Caco-2 (cell line): ENCODE measurements at regions of chr12 and their contacts with region 1.

Region 1: GRCh38 chr12:25524407-25524806 is 28.7 kb downstream of the LMNTD1 start:
- DNase-seq: peak; percentile 64 to 76
- H3K4me3 ChIP-seq: no peak overlapping the region
- H3K4me3 Mint-ChIP-seq: no peak overlapping the region
- H3K27ac Mint-ChIP-seq: peak overlapping the region; percentile 55
- H3K4me1 ChIP-seq: peaks cover 27% of the 10 kb centered on the region
- H3K4me1 Mint-ChIP-seq: peaks cover 23% of the 10 kb centered on the region
- H3K27me3 ChIP-seq: no peaks in the 10 kb centered on the region
- H3K27me3 Mint-ChIP-seq: no peaks in the 10 kb centered on the region
- CTCF ChIP-seq: no peak

Region 2: DNA sequence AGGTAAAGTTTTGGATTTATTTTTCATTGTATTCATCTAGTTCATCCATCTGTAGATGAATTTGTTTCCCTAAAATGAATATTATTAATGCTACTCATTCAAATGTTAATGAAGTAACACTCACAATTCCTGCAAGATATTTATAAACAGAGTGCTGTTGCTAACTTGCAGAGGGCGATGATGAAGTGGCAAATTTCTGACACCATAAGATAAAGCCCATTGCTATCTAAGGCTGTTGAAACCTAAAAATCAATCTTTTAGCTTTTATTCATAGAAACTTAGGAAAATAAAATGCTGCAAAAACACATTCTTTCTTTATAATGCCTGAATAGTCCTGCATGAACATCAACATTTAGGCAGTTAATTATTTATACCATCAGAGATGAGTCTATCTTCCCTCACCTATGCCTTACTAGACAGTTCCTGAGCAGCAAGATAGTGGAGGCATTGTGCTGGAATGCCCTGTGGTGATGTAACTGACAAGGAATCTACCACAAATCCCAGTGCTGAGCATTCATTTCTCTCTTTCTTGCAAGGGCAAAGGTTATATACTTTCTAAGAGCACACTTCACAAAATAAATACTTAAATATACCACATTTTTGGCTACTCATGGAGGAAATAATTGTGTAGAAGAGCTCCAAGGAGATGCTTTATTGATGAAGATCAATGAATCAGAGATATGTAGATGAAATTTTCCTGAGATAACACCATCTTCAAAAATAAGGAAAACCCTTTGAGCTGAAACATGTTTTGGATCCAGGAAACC is 28.9 kb before region 1 on chr12:
- CTCF ChIA-PET with region 1: no interaction called
- POLR2A ChIA-PET with region 1: no interaction called
- intact Hi-C with region 1: loop called (anchors 1 kb)
- DNase-seq: peak; percentile 63 to 67
- H3K4me3 ChIP-seq: no peak overlapping the region
- H3K4me3 Mint-ChIP-seq: peak overlapping the region; percentile 16
- H3K27ac Mint-ChIP-seq: peak overlapping the region; percentile 85
- H3K4me1 ChIP-seq: peaks cover 45% of the 10 kb centered on the region
- H3K4me1 Mint-ChIP-seq: peaks cover 46% of the 10 kb centered on the region
- H3K27me3 ChIP-seq: no peaks in the 10 kb centered on the region
- H3K27me3 Mint-ChIP-seq: no peaks in the 10 kb centered on the region
- CTCF ChIP-seq: no peak